Activated CD4-positive, alpha-beta memory T cell treated with anti-CD3 and anti-CD28 coated beads for 36 hours (primary cell): ENCODE measurements at regions of chr6 and their contacts with region 1.

Region 1: GRCh38 chr6:2634139-2634964 is 116.4 kb downstream of the MYLK4 start:
- DNase-seq: peak; percentile 86
- H3K4me3 Mint-ChIP-seq: peak overlapping the region; percentile 57
- H3K27ac Mint-ChIP-seq: no peak overlapping the region
- H3K4me1 Mint-ChIP-seq: peaks cover 5% of the 10 kb centered on the region
- H3K27me3 Mint-ChIP-seq: peaks cover 27% of the 10 kb centered on the region

Region 2: DNA sequence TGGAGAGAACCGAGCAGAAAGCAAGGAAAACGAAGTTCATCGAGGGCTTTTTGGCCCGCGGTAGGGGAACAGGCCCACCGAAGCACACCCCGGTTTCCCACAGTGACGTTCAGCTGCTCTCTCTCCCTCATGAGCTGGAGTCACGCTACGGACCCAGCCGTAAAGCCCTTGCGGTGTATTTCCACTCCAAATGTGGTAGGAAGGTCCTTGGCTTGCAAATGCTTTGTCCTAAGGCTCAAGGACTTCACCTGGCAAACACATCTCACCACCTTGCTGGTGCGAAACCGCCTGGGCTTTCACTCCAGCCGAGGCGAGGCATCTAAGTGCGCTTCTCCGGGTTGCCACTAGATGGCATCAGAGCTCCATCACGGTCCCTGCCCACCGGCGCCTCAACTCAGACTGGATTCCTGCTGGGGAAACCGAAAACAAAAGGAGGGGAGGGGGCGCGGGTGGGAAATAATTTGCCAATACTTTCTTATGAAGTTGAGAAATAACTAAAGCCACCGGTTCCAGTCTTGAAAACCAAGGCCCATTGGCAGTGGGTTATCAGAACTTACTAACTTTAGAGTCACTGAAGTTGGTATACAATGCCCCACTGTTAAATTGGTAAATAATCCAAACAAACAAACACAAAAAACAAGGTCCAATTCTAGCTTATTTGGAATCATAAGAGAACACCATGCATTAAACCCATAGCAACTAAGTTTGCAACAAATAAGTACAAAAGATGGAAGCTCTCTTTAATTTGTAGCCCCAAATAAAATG is 1038.1 kb before region 1 on chr6:
- CTCF ChIA-PET with region 1: interaction called, 68 read pairs
- POLR2A ChIA-PET with region 1: no interaction called
- intact Hi-C with region 1: loop called (anchors 2 kb)
- DNase-seq: peak; percentile 73
- H3K4me3 Mint-ChIP-seq: no peak overlapping the region
- H3K27ac Mint-ChIP-seq: no peak overlapping the region
- H3K4me1 Mint-ChIP-seq: peaks cover 4% of the 10 kb centered on the region
- H3K27me3 Mint-ChIP-seq: peaks cover 59% of the 10 kb centered on the region

Region 3: DNA sequence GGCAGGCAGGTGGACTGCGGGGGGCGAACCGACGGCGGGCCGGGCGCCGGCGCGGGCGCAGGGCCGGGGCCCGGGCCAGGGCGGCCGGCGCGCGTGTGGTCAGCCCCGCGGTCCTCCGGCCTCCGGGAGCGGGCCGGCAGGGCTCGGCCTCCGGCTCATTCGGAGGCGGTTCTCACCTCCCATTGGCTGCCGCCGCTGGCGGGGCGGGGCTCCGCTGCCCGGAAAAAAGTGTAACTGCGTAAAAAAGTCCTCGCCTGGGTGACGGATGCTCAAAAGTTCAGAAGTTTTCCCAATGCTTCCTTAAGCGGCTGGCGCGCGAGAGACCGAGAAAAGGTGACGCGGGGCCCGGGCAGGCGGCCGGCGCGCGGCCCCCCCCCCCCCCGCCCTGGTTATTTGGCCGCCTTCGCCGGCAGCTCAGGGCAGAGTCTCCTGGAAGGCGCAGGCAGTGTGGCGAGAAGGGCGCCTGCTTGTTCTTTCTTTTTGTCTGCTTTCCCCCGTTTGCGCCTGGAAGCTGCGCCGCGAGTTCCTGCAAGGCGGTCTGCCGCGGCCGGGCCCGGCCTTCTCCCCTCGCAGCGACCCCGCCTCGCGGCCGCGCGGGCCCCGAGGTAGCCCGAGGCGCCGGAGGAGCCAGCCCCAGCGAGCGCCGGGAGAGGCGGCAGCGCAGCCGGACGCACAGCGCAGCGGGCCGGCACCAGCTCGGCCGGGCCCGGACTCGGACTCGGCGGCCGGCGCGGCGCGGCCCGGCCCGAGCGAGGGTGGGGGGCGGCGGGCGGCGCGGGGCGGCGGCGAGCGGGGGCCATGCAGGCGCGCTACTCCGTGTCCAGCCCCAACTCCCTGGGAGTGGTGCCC is 1024.5 kb before region 1 on chr6 and contains the start of gene FOXC1:
- CTCF ChIA-PET with region 1: interaction called, 12 read pairs
- POLR2A ChIA-PET with region 1: no interaction called
- intact Hi-C with region 1: no loop called
- DNase-seq: peak; percentile 65
- H3K4me3 Mint-ChIP-seq: peak within 1 kb of the TSS; percentile 59
- H3K27ac Mint-ChIP-seq: no peak within 1 kb of the TSS
- H3K4me1 Mint-ChIP-seq: peaks cover 50% of the 10 kb centered on the region
- H3K27me3 Mint-ChIP-seq: peaks cover 61% of the 10 kb centered on the region
- total RNA-seq, gene FOXC1: 0.05 to 0.07 TPM

Region 4: GRCh38 chr6:2186516-2186915 is 447.8 kb before region 1 on chr6:
- CTCF ChIA-PET with region 1: interaction called, 4 read pairs
- POLR2A ChIA-PET with region 1: no interaction called
- intact Hi-C with region 1: loop called (anchors 10 kb)
- DNase-seq: no peak
- H3K4me3 Mint-ChIP-seq: no peak overlapping the region
- H3K27ac Mint-ChIP-seq: no peak overlapping the region
- H3K4me1 Mint-ChIP-seq: peaks cover 16% of the 10 kb centered on the region
- H3K27me3 Mint-ChIP-seq: peaks cover 15% of the 10 kb centered on the region

Region 5: GRCh38 chr6:2448820-2449571 is 185.4 kb before region 1 on chr6:
- CTCF ChIA-PET with region 1: interaction called, 24 read pairs
- POLR2A ChIA-PET with region 1: no interaction called
- intact Hi-C with region 1: loop called (anchors 5 kb)
- DNase-seq: peak; percentile 34
- H3K4me3 Mint-ChIP-seq: peak overlapping the region; percentile 14
- H3K27ac Mint-ChIP-seq: no peak overlapping the region
- H3K4me1 Mint-ChIP-seq: peaks cover 3% of the 10 kb centered on the region
- H3K27me3 Mint-ChIP-seq: peaks cover 3% of the 10 kb centered on the region

Region 6: DNA sequence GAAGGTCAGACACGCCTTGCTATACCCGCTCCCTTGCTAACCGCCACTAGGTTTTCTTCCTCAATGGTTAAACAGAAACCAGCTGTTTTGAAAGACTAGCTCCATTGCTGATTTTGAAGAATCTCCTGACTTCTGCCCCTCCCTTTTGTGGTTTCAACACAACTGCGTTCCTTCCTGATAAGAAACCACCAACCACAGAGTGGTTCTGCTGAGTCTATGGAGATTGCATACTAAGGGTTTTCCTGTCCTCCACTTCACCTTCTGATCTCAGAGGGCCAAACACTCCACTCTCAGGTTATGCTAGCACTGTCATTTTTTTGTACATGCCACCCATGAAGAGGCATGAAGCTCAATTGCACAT is 91.5 kb before region 1 on chr6:
- CTCF ChIA-PET with region 1: interaction called, 10 read pairs
- POLR2A ChIA-PET with region 1: no interaction called
- intact Hi-C with region 1: loop called (anchors 5 kb)
- DNase-seq: peak; percentile 54
- H3K4me3 Mint-ChIP-seq: peak overlapping the region; percentile 4
- H3K27ac Mint-ChIP-seq: no peak overlapping the region
- H3K4me1 Mint-ChIP-seq: peaks cover 24% of the 10 kb centered on the region
- H3K27me3 Mint-ChIP-seq: peaks cover 68% of the 10 kb centered on the region

Region 7: DNA sequence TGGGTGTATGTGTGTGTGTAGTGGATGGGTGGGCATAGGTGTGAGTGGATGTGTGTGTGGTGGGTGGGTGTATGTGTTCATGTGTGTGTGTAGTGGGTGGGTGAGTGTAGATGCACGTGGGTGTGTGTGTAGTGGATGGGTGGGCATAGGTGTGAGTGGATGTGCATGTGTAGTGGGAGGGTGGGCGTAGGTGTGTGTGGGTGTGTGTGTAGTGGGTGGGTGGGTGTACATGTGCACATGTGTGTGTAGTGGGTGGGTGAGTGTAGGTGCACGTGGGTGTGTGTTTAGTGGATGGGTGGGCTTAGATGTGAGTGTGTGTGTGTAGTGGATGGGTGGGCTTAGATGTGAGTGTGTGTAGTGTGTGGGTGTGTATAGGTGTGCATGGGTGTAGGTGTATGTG is 12.0 kb after region 1 on chr6:
- CTCF ChIA-PET with region 1: interaction called, 29 read pairs
- POLR2A ChIA-PET with region 1: no interaction called
- intact Hi-C with region 1: no loop called
- DNase-seq: no peak
- H3K4me3 Mint-ChIP-seq: no peak overlapping the region
- H3K27ac Mint-ChIP-seq: no peak overlapping the region
- H3K4me1 Mint-ChIP-seq: no peaks in the 10 kb centered on the region
- H3K27me3 Mint-ChIP-seq: peaks cover 34% of the 10 kb centered on the region